WTC11 (cell line): ENCODE measurements at regions of chr19 and their contacts with region 1.

Region 1: GRCh38 chr19:54189735-54190502 is 539 bp upstream of the MBOAT7 start:
- DNase-seq: peak; percentile 100
- ATAC-seq: peak; percentile 71
- H3K4me3 Mint-ChIP-seq: peak overlapping the region; percentile 85
- H3K27ac Mint-ChIP-seq: peak overlapping the region; percentile 100
- H3K4me1 Mint-ChIP-seq: peaks cover 35% of the 10 kb centered on the region
- H3K27me3 Mint-ChIP-seq: peaks cover 3% of the 10 kb centered on the region; the same call in 1 of the 2 replicates
- CTCF ChIP-seq: no peak

Region 2: DNA sequence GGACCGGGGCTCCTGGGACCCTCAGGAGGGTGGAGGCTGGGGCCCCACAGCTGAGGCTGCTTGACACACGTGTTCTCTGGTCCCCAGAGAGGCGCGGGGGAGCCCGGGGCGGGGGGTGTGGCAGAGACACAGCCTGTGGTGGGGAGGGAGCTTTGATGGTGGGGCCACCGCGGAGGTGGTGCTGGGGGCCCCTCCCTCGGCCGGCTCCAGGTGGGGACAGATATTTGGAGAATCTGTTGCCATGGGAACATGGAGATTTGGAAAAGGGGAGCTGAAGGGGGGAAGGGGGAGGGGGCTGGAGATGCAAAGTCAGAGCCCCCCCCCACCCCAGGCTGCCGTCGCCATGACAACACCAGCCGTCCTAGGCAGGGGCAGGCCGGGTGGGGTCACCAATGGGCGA is 306.7 kb before region 1 on chr19:
- CTCF ChIA-PET with region 1: no interaction called
- POLR2A ChIA-PET with region 1: no interaction called
- DNase-seq: peak; percentile 53
- ATAC-seq: no peak
- H3K4me3 Mint-ChIP-seq: no peak overlapping the region; the same call in 1 of the 2 replicates
- H3K27ac Mint-ChIP-seq: no peak overlapping the region
- H3K4me1 Mint-ChIP-seq: peaks cover 17% of the 10 kb centered on the region
- H3K27me3 Mint-ChIP-seq: peaks cover 14% of the 10 kb centered on the region
- CTCF ChIP-seq: no peak

Region 3: DNA sequence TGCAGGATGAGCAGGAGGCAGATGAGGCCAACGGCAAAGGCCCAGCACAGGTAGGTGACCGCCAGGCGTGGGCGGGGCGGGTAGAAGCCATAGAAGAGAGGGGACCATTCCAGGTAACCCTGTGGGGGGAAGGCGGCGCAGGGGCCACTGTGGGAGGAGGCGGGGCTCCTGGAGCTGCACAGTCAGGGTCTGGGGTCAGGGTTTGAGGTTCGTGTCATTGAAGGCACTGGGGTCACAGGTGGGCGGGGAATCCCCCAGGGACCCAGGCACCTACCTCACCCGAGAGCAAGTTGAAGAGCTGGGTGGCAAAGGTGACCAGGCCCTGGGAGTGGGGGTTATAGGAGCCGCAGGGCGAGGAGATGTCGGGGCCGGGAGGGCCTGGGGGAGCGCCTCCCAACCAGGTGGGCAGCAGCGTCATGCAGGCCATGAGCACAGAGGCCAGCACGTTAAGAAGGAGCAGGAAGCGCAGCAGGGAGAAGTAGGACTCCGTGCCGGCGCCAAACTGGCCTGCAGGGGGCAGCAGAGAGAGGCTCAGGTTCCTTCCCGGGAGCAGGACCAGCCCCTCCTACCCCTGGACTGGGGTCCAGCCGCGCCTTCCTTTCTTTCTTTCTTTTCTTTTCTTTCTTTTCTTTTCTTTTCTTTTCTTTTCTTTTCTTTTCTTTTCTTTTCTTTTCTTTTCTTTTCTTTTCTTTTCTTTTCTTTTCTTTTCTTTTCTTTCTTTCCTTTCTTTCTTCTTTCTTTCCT is 21.6 kb before region 1 on chr19:
- CTCF ChIA-PET with region 1: interaction called, 31 read pairs
- POLR2A ChIA-PET with region 1: interaction called, 9 read pairs
- DNase-seq: peak; percentile 99
- ATAC-seq: peak; percentile 46
- H3K4me3 Mint-ChIP-seq: no peak overlapping the region
- H3K27ac Mint-ChIP-seq: no peak overlapping the region
- H3K4me1 Mint-ChIP-seq: peaks cover 20% of the 10 kb centered on the region
- H3K27me3 Mint-ChIP-seq: peaks cover 32% of the 10 kb centered on the region
- CTCF ChIP-seq: peak; percentile 82

Region 4: DNA sequence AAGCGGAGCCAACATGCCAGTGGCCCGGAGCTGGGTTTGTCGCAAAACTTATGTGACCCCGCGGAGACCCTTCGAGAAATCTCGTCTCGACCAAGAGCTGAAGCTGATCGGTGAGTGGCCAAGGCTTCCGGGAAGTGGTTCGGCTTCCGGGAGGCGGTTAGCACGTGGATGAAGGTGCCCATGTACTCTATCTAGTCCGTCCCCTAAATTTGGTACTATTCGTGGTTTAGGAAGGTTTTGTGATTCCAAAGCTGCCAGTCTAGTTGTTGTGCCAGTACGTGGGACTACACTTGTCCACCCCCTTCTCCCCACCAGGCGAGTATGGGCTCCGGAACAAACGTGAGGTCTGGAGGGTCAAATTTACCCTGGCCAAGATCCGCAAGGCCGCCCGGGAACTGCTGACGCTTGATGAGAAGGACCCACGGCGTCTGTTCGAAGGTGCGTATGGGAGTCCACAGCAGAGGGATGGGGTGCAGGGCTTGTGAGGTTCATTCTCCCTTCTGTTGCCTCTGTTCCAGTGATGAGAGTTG is 11.3 kb after region 1 on chr19:
- CTCF ChIA-PET with region 1: interaction called, 6 read pairs
- POLR2A ChIA-PET with region 1: interaction called, 25 read pairs
- DNase-seq: no peak
- ATAC-seq: no peak
- H3K4me3 Mint-ChIP-seq: peak overlapping the region; percentile 100
- H3K27ac Mint-ChIP-seq: peak overlapping the region; percentile 100
- H3K4me1 Mint-ChIP-seq: peaks cover 53% of the 10 kb centered on the region
- H3K27me3 Mint-ChIP-seq: no peaks in the 10 kb centered on the region
- CTCF ChIP-seq: no peak

Region 5: DNA sequence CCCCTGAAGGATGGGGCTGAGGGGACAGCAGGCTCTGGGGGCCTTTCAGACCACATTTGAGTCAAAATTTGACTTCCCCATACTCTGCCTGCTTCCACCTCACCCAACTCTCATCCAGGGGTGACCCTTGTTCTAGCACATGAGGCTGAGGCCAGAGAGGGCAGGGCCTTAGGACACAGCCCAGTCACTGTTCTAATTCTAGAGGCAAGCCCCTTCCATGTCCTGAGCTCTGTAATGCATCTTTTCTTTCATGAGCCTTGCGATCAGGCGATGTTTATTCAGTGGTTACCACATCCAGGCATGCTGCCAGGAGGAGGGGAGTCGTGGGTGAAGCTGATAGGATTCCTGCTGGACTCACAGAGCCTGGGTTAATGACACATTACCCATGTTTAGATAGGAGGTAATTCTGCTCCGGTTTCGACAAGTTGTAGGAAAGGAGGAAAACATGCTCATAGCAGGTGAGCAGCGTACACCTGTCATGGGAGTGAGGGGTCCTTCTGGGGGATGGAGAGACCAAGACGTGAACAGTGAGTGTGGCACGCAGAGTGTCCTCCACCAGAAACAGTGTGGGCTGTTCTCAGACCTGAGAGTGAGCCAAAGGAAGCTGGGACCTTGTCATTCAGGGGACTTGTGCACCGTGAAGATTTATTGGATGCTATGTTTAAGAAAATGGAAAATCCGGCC is 20.0 kb after region 1 on chr19:
- CTCF ChIA-PET with region 1: interaction called, 6 read pairs
- POLR2A ChIA-PET with region 1: interaction called, 21 read pairs
- DNase-seq: no peak
- ATAC-seq: peak; percentile 6
- H3K4me3 Mint-ChIP-seq: no peak overlapping the region
- H3K27ac Mint-ChIP-seq: peak overlapping the region; percentile 52
- H3K4me1 Mint-ChIP-seq: peaks cover 28% of the 10 kb centered on the region
- H3K27me3 Mint-ChIP-seq: no peaks in the 10 kb centered on the region; the same call in 1 of the 2 replicates
- CTCF ChIP-seq: no peak